Activated T-helper 1 cell treated with anti-CD3 and anti-CD28 coated beads, Interleukin-12 subunit alpha, Interleukin-12 subunit beta, Interleukin-2, Interleukin-4 antibody, amounts not matched to agents 30 ng/mL and 10 ng/mL and 1 ng/mL, durations not matched to agents 14 hours and 24 hours and 36 hours (primary cell): ENCODE measurements at regions of chr3 and their contacts with region 1.

Region 1: GRCh38 chr3:58305882-58306711 is at the starts of genes HTD2 and RPP14:
- DNase-seq: peak; percentile 98
- H3K4me3 Mint-ChIP-seq: peak within 1 kb of the TSS; percentile 95
- H3K27ac Mint-ChIP-seq: peak within 1 kb of the TSS; percentile 99
- H3K4me1 Mint-ChIP-seq: peaks cover 27% of the 10 kb centered on the region
- H3K27me3 Mint-ChIP-seq: peaks cover 15% of the 10 kb centered on the region
- total RNA-seq, gene HTD2: 11.5 and 13.6 TPM in 2 replicates
- total RNA-seq, gene RPP14: 22.7 and 23.4 TPM in 2 replicates

Region 2: GRCh38 chr3:57227204-57227929 is 1078.7 kb before region 1 on chr3 and contains the start of gene APPL1:
- intact Hi-C with region 1: loop called (anchors 5 kb)
- DNase-seq: peak; percentile 92
- H3K4me3 Mint-ChIP-seq: peak within 1 kb of the TSS; percentile 93
- H3K27ac Mint-ChIP-seq: peak within 1 kb of the TSS; percentile 82
- H3K4me1 Mint-ChIP-seq: peaks cover 42% of the 10 kb centered on the region
- H3K27me3 Mint-ChIP-seq: peaks cover 8% of the 10 kb centered on the region
- total RNA-seq, gene APPL1: 39.9 and 46.0 TPM in 2 replicates

Region 3: DNA sequence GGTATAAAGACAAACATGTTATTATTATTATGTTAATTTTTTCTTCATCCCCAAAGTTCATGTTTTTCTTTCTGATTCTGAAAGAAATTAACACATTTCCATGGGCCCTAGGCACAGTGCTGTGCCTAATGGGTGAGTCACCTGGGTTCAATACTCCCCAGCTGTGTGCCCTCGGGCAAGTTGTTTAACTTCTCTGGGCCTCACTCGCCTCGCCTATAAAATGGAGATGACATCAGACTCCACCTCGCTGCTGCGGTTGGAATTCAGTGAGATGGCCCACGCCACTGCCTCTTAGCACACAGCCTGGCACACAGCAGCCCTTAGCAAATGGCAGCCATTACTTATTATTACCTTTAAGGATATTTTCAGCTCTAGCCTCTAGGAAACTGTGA is 117.9 kb before region 1 on chr3:
- intact Hi-C with region 1: loop called (anchors 1 kb)
- DNase-seq: no peak
- H3K4me3 Mint-ChIP-seq: no peak overlapping the region
- H3K27ac Mint-ChIP-seq: no peak overlapping the region
- H3K4me1 Mint-ChIP-seq: no peaks in the 10 kb centered on the region
- H3K27me3 Mint-ChIP-seq: no peaks in the 10 kb centered on the region

Region 4: DNA sequence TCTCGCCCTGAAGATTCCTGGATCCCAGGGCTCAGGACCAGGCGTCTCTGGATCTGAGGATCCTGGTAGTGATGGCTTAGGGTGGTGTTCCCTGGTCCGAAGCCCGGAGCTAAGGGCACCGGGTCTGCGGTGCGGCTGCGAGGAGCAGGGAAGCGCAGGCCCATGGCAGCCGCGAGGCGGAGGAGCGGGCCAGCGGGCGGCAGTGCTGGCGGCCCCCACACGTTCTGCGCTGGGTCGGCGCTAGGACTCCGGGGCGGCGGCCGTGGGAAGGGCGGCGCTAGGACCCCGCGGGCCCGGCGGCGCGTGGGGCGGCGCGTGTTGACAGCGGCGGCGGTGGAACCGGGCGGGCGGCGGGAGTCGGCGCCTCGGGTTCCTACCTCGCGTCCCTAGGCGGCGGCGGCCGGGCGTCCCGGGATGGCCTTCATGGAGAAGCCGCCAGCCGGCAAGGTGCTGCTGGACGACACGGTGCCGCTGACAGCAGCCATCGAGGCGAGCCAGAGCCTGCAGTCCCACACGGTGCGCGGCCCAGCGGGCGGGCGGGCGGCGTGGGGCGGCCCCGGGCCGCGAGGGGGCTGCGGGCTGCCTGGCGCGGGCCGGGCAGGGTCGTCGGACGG is 26.6 kb after region 1 on chr3 and contains the start of gene PXK:
- intact Hi-C with region 1: loop called (anchors 1 kb)
- DNase-seq: peak; percentile 83
- H3K4me3 Mint-ChIP-seq: peak within 1 kb of the TSS; percentile 100
- H3K27ac Mint-ChIP-seq: peak within 1 kb of the TSS; percentile 99
- H3K4me1 Mint-ChIP-seq: peaks cover 48% of the 10 kb centered on the region
- H3K27me3 Mint-ChIP-seq: no peaks in the 10 kb centered on the region
- total RNA-seq, gene PXK: 43.4 and 48.1 TPM in 2 replicates

Region 5: GRCh38 chr3:58491506-58492402 is 185.7 kb after region 1 on chr3 and contains the start of gene KCTD6:
- intact Hi-C with region 1: loop called (anchors 1 kb)
- DNase-seq: peak; percentile 87
- H3K4me3 Mint-ChIP-seq: peak within 1 kb of the TSS; percentile 93
- H3K27ac Mint-ChIP-seq: peak within 1 kb of the TSS; percentile 85
- H3K4me1 Mint-ChIP-seq: peaks cover 54% of the 10 kb centered on the region
- H3K27me3 Mint-ChIP-seq: peaks cover 40% of the 10 kb centered on the region
- total RNA-seq, gene KCTD6: 7.0 and 8.9 TPM in 2 replicates

Region 6: DNA sequence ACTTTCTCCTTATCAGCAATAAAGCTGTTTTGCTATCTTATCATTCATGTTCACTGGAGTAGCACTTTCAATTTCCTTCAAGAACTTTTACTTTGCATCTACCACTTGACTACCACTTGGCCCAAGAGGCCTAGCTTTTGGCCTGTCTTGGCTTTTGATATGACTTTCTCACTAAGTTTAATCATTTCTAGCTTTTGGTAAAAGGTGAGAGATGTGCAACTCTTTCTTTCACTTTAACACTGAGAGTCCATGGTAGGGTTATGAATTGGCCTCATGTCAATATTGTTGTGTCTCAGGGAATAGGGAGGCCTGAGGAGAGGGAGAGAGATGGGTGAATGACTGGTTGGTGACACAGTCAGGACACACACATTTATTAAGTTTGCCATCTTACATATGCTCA is 391.5 kb after region 1 on chr3:
- intact Hi-C with region 1: no loop called
- DNase-seq: no peak
- H3K4me3 Mint-ChIP-seq: no peak overlapping the region
- H3K27ac Mint-ChIP-seq: no peak overlapping the region
- H3K4me1 Mint-ChIP-seq: peaks cover 27% of the 10 kb centered on the region
- H3K27me3 Mint-ChIP-seq: peaks cover 6% of the 10 kb centered on the region

Region 7: DNA sequence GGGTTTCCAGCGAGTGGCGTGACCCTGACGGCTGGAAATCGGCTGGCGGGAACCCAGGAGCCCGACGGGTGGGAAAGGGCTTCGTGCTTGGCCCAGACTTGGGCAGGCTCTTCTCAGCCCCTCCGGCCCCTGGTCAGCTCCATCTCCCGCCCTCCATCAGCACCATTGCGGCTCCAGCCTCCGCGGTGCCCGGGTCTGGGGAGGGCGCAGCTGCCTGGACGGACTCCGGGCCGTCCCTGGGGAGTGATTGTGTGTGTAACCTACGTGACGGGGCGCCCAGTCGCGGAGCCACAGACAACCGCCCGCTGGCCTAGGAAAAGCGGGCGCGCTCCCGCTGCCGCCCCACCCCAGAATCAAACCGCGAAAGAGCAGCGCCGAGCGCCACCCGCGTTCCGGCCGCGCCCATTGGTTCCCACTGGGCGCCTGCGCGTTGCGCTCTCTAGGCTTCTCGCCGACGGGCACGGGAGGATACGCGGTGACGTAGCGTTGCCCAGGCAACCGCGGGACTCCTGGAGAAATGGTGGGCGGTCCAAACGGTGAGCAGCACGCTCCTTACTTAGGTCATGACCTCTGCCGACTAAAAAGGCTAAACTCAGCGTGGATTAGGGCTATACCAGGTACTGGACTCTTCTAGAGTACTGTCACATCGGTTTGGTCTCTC is 743.7 kb after region 1 on chr3 and contains the start of gene CFAP20DC:
- intact Hi-C with region 1: loop called (anchors 2 kb)
- DNase-seq: peak; percentile 90
- H3K4me3 Mint-ChIP-seq: peak within 1 kb of the TSS; percentile 65
- H3K27ac Mint-ChIP-seq: peak within 1 kb of the TSS; percentile 67
- H3K4me1 Mint-ChIP-seq: peaks cover 15% of the 10 kb centered on the region
- H3K27me3 Mint-ChIP-seq: peaks cover 14% of the 10 kb centered on the region
- total RNA-seq, gene CFAP20DC: 0.86 and 1.2 TPM in 2 replicates